B cell (primary cell): ENCODE measurements at regions of chr10 and their contacts with region 1.

Region 1: DNA sequence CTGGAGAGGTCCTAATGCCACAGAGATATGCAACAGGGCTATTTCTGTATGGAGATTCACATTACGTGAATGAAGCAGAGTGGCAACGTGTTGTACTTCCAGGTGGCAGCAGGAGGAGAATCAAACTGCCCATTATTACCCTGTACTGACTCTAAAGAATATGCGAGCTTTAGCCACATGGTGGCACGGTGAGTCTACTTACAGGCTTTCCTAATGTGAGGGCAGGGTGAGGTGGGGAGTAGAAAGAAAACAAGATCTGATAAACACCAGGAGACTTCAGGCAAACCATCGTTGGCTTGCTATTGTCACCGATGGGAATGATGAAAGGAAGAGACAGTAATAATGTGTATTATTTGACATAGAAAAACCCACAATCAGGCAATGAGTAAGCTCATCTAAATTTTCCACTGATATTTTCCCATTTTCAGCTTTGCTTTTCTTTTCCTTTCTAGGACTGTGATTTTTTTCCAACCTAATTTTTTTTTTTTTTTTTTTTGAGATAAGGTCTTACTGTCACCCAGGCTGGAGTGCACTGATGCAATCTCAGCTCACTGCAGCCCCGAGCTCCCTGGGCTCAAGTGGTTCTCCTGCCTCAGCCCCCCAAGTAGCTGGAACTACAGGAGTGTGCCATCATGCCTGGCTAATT is 164.3 kb downstream of the BTAF1 start:
- DNase-seq: peak; percentile 83
- ATAC-seq: peak; percentile 99
- H3K4me3 ChIP-seq: no peak overlapping the region
- H3K4me3 Mint-ChIP-seq: no peak overlapping the region
- H3K27ac ChIP-seq: no peak overlapping the region
- H3K27ac Mint-ChIP-seq: no peak overlapping the region
- H3K4me1 ChIP-seq: peaks cover 0 to 5% of the 10 kb centered on the region in 2 donors
- H3K4me1 Mint-ChIP-seq: peaks cover 11% of the 10 kb centered on the region
- H3K27me3 ChIP-seq: no peaks in the 10 kb centered on the region
- H3K27me3 Mint-ChIP-seq: no peaks in the 10 kb centered on the region
- CTCF ChIP-seq: peak; percentile 88

Region 2: DNA sequence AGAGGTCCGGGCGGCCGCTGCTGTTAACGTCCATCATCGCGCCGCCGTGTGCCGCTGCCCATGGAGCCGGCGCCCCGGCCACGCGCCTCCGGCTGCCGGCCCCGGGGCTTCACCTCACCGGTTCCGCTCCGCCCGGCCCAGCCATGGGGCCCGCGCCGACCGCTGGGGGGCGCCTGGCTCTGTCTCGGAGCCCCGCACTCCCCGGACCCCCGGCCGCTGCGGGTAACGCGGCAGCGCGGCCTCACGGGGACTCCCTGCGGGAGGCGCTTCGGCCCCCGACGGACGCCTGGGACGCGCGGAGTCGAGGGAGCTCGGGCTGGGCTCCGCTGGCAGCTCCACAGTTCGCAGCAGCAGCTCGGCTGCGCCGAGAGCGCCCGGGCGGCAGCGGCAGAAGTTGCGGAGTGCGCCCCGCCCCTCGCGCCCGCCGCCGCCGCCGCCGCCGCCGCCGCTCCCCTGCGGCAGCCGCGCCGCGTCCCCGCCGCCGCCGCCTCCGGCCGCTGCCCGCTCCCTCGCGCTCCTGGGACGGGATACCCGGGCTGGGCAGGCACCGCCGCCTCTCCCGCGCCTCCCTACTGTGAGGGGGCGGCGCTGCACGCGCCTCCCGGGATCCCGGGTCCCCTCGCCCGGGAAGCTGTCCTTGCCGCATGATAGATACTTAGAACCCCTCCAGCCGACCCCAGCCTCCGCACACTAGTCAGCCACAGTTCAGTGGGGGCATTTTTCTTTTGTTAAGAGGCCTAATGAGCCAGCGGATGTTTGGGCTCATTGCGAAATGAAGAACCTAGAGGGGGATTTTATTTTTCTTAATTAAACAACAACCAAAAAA is 1230.0 kb before region 1 on chr10 and contains the start of gene HTR7:
- CTCF ChIA-PET with region 1: no interaction called
- POLR2A ChIA-PET with region 1: no interaction called
- intact Hi-C with region 1: no loop called
- DNase-seq: peak; percentile 84
- ATAC-seq: peak; percentile 90
- H3K4me3 ChIP-seq: peak within 1 kb of the TSS; percentile 21 to 66 (median 62)
- H3K4me3 Mint-ChIP-seq: peak within 1 kb of the TSS; percentile 96
- H3K27ac ChIP-seq: no peak within 1 kb of the TSS
- H3K27ac Mint-ChIP-seq: peak within 1 kb of the TSS; percentile 83
- H3K4me1 ChIP-seq: peaks cover 16 to 17% of the 10 kb centered on the region in 2 donors
- H3K4me1 Mint-ChIP-seq: peaks cover 13% of the 10 kb centered on the region
- H3K27me3 ChIP-seq: peaks cover 0 to 40% (median 39%) of the 10 kb centered on the region in 4 experiments
- H3K27me3 Mint-ChIP-seq: peaks cover 42% of the 10 kb centered on the region
- CTCF ChIP-seq: peak; percentile 78
- total RNA-seq, gene HTR7: not detected in 2 replicates

Region 3: GRCh38 chr10:92045641-92046106 is 42.2 kb before region 1 on chr10:
- CTCF ChIA-PET with region 1: no interaction called
- POLR2A ChIA-PET with region 1: no interaction called
- intact Hi-C with region 1: no loop called
- DNase-seq: no peak
- ATAC-seq: no peak
- H3K4me3 ChIP-seq: no peak overlapping the region
- H3K4me3 Mint-ChIP-seq: no peak overlapping the region
- H3K27ac ChIP-seq: no peak overlapping the region
- H3K27ac Mint-ChIP-seq: no peak overlapping the region
- H3K4me1 ChIP-seq: peaks cover 9 to 11% of the 10 kb centered on the region in 2 donors
- H3K4me1 Mint-ChIP-seq: peaks cover 12% of the 10 kb centered on the region
- H3K27me3 ChIP-seq: no peaks in the 10 kb centered on the region
- H3K27me3 Mint-ChIP-seq: no peaks in the 10 kb centered on the region
- CTCF ChIP-seq: no peak

Region 4: DNA sequence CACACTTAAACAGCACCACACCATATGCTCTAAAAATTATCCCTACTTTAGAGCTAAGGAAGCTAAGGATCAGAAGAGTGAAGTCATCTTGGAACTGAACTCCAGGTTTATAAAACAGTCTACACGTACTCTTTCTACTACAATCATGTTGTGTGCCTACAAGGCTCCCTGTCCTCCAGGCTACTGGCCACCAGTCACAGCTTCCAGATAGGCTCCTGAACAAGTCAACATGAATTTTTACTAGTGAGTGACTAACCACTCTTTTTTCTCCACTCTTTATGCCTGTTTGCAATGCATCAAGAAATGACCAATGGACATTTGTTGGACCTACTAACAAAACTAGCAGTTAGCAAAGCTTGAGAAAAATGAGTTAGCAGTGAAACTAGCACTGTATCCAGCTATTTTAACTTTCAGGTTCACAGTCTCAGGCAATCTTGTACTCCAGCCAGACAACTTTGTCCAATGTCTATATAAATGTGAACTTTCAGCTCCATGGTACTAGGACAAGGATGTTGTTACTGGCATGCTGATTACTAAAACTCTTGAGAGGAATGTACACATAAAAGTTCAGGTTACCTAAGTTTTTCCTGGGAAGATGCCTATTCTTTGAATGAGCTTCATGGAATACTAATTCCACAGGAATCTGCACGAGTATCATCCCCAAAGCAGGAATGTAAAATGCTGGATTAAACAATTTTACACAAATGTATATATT is 15.7 kb after region 1 on chr10:
- CTCF ChIA-PET with region 1: interaction called, 11 read pairs
- POLR2A ChIA-PET with region 1: no interaction called
- intact Hi-C with region 1: no loop called
- DNase-seq: no peak
- ATAC-seq: no peak
- H3K4me3 ChIP-seq: no peak overlapping the region
- H3K4me3 Mint-ChIP-seq: no peak overlapping the region
- H3K27ac ChIP-seq: no peak overlapping the region
- H3K27ac Mint-ChIP-seq: no peak overlapping the region
- H3K4me1 ChIP-seq: no peaks in the 10 kb centered on the region
- H3K4me1 Mint-ChIP-seq: peaks cover 10% of the 10 kb centered on the region
- H3K27me3 ChIP-seq: no peaks in the 10 kb centered on the region
- H3K27me3 Mint-ChIP-seq: no peaks in the 10 kb centered on the region
- CTCF ChIP-seq: no peak

Region 5: GRCh38 chr10:92142949-92143348 is 55.1 kb after region 1 on chr10:
- CTCF ChIA-PET with region 1: interaction called, 11 read pairs
- POLR2A ChIA-PET with region 1: no interaction called
- intact Hi-C with region 1: no loop called
- DNase-seq: peak; percentile 61
- ATAC-seq: peak; percentile 39
- H3K4me3 ChIP-seq: peak overlapping the region; percentile 6 to 51 (median 27)
- H3K4me3 Mint-ChIP-seq: peak overlapping the region; percentile 79
- H3K27ac ChIP-seq: peak overlapping the region; percentile 52 to 61
- H3K27ac Mint-ChIP-seq: peak overlapping the region; percentile 88
- H3K4me1 ChIP-seq: peaks cover 34 to 53% of the 10 kb centered on the region in 2 donors
- H3K4me1 Mint-ChIP-seq: peaks cover 59% of the 10 kb centered on the region
- H3K27me3 ChIP-seq: no peaks in the 10 kb centered on the region
- H3K27me3 Mint-ChIP-seq: no peaks in the 10 kb centered on the region
- CTCF ChIP-seq: no peak

Region 6: GRCh38 chr10:92290837-92291615 is 203.2 kb after region 1 on chr10 and contains the starts of genes CPEB3 and MARCHF5:
- CTCF ChIA-PET with region 1: interaction called, 41 read pairs
- POLR2A ChIA-PET with region 1: interaction called, 3 read pairs
- intact Hi-C with region 1: loop called (anchors 1 kb)
- DNase-seq: peak; percentile 96
- ATAC-seq: peak; percentile 97
- H3K4me3 ChIP-seq: peak within 1 kb of the TSS; percentile 57 to 99 (median 85)
- H3K4me3 Mint-ChIP-seq: peak within 1 kb of the TSS; percentile 95
- H3K27ac ChIP-seq: peak within 1 kb of the TSS; percentile 62 to 88
- H3K27ac Mint-ChIP-seq: peak within 1 kb of the TSS; percentile 91
- H3K4me1 ChIP-seq: peaks cover 9 to 20% of the 10 kb centered on the region in 2 donors
- H3K4me1 Mint-ChIP-seq: peaks cover 29% of the 10 kb centered on the region
- H3K27me3 ChIP-seq: no peaks in the 10 kb centered on the region
- H3K27me3 Mint-ChIP-seq: no peaks in the 10 kb centered on the region
- CTCF ChIP-seq: peak; percentile 68
- total RNA-seq, gene CPEB3: 5.0 and 6.7 TPM in 2 replicates
- total RNA-seq, gene MARCHF5: 25.9 and 27.8 TPM in 2 replicates

Region 7: GRCh38 chr10:92303096-92303495 is 215.2 kb after region 1 on chr10:
- CTCF ChIA-PET with region 1: interaction called, 14 read pairs
- POLR2A ChIA-PET with region 1: no interaction called
- intact Hi-C with region 1: no loop called
- DNase-seq: no peak
- ATAC-seq: no peak
- H3K4me3 ChIP-seq: no peak overlapping the region
- H3K4me3 Mint-ChIP-seq: no peak overlapping the region
- H3K27ac ChIP-seq: no peak overlapping the region
- H3K27ac Mint-ChIP-seq: no peak overlapping the region
- H3K4me1 ChIP-seq: no peaks in the 10 kb centered on the region
- H3K4me1 Mint-ChIP-seq: peaks cover 36% of the 10 kb centered on the region
- H3K27me3 ChIP-seq: no peaks in the 10 kb centered on the region
- H3K27me3 Mint-ChIP-seq: no peaks in the 10 kb centered on the region
- CTCF ChIP-seq: no peak

Region 8: DNA sequence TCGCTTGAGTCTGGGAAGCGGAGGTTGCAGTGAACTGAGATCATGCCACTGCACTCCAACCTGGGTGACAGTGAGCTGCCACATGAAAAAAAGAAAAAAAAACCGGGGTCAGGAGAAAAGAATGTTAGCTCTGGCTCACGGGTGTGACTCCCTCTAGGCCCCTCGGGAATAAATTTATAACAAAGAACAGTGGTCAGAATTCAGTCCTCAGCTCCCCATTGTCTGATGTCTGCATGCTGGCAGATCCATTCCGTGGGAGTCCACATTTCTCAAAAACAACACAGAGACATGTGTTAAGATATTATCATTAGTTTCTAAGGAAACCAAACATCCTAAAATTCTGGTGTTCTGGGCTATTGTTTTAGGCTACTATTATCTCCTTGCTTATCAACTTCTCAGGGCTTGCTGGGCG is 293.7 kb after region 1 on chr10:
- CTCF ChIA-PET with region 1: no interaction called
- POLR2A ChIA-PET with region 1: no interaction called
- intact Hi-C with region 1: no loop called
- DNase-seq: no peak
- ATAC-seq: no peak
- H3K4me3 ChIP-seq: no peak overlapping the region
- H3K4me3 Mint-ChIP-seq: no peak overlapping the region
- H3K27ac ChIP-seq: no peak overlapping the region
- H3K27ac Mint-ChIP-seq: no peak overlapping the region
- H3K4me1 ChIP-seq: no peaks in the 10 kb centered on the region
- H3K4me1 Mint-ChIP-seq: no peaks in the 10 kb centered on the region
- H3K27me3 ChIP-seq: peaks cover 0 to 2% (median 0%) of the 10 kb centered on the region in 4 experiments
- H3K27me3 Mint-ChIP-seq: peaks cover 21% of the 10 kb centered on the region
- CTCF ChIP-seq: no peak

Region 9: DNA sequence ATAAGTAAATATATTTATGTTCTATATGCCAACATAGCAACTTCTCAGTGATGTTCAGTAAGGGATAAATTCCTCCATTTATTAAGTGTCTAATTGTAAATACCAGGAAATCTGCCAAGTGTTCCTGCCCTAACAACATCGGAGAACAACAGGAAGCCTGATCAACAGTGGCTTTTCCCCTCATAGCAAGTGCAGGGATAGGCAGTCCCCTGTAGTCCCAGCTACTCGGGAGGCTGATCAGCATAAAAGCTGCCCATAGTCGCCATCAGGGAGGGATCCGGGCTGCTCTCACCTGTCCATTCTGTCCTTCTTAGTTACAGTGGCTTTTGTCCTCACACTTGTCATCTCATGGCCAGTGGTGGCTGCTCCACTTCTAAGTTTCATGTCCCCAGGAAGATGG is 344.7 kb after region 1 on chr10:
- CTCF ChIA-PET with region 1: interaction called, 136 read pairs
- POLR2A ChIA-PET with region 1: interaction called, 5 read pairs
- intact Hi-C with region 1: loop called (anchors 1 kb)
- DNase-seq: no peak
- ATAC-seq: no peak
- H3K4me3 ChIP-seq: no peak overlapping the region
- H3K4me3 Mint-ChIP-seq: no peak overlapping the region
- H3K27ac ChIP-seq: no peak overlapping the region
- H3K27ac Mint-ChIP-seq: no peak overlapping the region
- H3K4me1 ChIP-seq: no peaks in the 10 kb centered on the region
- H3K4me1 Mint-ChIP-seq: no peaks in the 10 kb centered on the region
- H3K27me3 ChIP-seq: no peaks in the 10 kb centered on the region
- H3K27me3 Mint-ChIP-seq: no peaks in the 10 kb centered on the region
- CTCF ChIP-seq: no peak

Region 10: DNA sequence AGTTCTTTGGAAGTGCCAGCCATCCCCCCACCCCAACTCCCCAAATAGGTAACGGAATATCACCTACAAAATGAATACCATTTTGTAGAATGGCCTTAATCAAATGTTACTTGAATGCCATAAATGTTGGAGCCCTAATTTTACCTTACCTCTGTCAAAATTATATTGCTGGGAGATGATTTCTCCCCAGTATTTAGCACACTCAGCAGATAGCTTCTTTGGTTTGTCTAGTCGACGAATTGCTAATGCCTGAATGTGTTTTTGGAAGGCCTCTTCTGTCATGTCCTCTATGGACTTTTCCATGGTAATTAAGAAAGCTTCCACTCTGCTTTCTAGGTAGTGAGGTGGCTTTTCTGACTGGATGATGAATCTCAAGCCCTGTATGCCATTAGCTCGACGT is 375.7 kb after region 1 on chr10:
- CTCF ChIA-PET with region 1: interaction called, 10 read pairs
- POLR2A ChIA-PET with region 1: no interaction called
- intact Hi-C with region 1: no loop called
- DNase-seq: no peak
- ATAC-seq: no peak
- H3K4me3 ChIP-seq: no peak overlapping the region
- H3K4me3 Mint-ChIP-seq: no peak overlapping the region
- H3K27ac ChIP-seq: no peak overlapping the region
- H3K27ac Mint-ChIP-seq: no peak overlapping the region
- H3K4me1 ChIP-seq: no peaks in the 10 kb centered on the region
- H3K4me1 Mint-ChIP-seq: no peaks in the 10 kb centered on the region
- H3K27me3 ChIP-seq: no peaks in the 10 kb centered on the region
- H3K27me3 Mint-ChIP-seq: no peaks in the 10 kb centered on the region
- CTCF ChIP-seq: no peak